ENCODE measurements at regions of chr3 and their contacts with region 1.

Region 1: DNA sequence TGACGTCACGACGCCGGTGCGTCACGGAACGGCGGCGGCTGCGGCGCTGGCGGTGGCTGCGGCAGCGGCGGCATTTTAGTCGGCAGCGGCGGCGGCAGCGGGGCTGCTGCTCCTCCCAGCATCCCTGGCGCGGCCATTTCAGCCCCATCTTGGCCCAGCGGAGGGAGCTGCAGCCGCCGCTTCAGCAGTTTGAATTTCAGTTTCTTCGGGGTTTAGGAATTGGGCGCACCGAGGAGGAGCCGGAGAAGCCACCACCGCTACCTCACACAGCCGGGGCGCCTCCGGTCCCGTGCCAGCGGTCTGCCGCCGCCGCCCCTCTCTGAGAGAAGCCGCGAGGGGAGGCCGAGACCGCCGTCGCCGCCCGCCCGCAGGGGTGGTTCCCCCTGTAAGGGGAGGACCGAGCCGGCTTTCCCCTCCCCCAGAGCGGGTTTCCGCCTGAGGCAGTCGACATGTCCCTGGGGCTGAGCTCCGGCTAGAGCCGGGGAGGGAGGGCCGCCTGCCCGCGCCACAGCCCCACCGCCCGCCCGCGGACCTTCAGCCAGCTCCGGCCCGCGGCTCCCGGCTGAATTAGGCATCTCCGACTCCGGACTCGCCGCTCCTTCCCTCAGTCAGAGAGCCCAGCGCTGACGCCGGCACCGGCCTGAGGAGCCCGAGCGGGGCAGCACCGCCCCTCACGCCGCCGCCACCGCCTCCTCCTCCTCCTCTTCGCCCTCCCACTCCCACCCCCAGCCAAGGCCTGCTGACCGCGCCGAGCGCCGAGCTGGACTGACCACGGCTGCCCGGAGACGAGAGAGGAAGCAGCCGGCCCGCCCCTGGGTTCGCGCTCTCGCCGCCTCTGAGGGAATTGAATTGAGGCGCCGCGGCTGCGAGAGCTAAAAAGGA is at the start of gene TSC22D2:
- DNase-seq: peak; percentile 98
- H3K4me3 ChIP-seq: peak within 1 kb of the TSS; percentile 89 to 92 (median 89)
- H3K27ac ChIP-seq: peak within 1 kb of the TSS; percentile 96 to 100 (median 98)
- H3K4me1 ChIP-seq: peaks cover 0 to 29% (median 13%) of the 10 kb centered on the region in 4 donors
- H3K27me3 ChIP-seq: no peaks in the 10 kb centered on the region
- CTCF ChIP-seq: peak in 1 of 4 experiments; percentile 25
- EP300 ChIP-seq: peak in 2 of 4 donors; percentile 16 to 35
- POLR2A ChIP-seq: peak; percentile 96 to 97
- total RNA-seq, gene TSC22D2: 14.6 to 24.9 (median 17.8) TPM

Region 2: DNA sequence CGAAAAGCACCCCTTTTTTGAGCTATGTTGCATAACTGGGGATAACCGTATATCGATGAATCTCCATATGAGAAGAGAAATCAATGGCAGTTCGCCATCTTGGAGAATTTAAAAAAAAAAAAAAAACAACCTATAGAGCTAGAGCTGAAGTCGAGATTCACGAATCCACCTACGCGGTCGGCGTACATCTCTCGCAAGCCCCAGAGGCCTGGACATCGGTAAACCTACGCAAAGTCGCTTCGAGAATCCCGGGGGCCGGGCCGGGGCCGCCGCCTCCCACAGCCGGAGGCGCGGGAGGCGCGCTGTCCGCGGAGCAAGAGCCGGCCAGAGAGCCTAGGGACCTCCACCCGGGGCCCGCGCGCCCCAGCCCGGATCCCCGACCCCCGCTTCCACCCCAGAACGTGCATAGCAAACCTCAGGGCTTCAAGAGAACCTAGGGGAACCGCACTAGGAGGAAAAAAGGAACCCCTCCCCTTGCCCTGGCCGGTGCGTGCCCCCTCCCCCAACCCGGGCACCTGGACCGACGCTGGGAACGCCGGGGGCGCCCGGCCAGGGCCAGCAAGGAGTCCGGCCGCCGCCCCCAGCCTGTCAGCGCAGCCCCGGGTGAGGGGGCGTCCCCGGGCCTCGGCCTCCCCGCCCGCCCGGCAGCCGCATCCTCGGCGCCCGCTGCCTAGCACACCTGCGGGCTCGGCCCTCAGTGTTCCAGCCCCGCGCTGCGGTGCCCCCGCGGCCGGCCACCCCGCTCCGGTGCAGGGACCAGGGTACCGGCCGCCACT is 438.3 kb before region 1 on chr3:
- intact Hi-C with region 1: loop called (anchors 2 kb)
- DNase-seq: peak; percentile 94
- H3K4me3 ChIP-seq: peak overlapping the region; percentile 79 to 98 (median 86)
- H3K27ac ChIP-seq: peak overlapping the region; percentile 92 to 98 (median 97)
- H3K4me1 ChIP-seq: peaks cover 0 to 47% (median 25%) of the 10 kb centered on the region in 4 donors
- H3K27me3 ChIP-seq: no peaks in the 10 kb centered on the region
- CTCF ChIP-seq: no peak
- EP300 ChIP-seq: no peak
- POLR2A ChIP-seq: peak in 1 of 2 donors; percentile 41

Region 3: DNA sequence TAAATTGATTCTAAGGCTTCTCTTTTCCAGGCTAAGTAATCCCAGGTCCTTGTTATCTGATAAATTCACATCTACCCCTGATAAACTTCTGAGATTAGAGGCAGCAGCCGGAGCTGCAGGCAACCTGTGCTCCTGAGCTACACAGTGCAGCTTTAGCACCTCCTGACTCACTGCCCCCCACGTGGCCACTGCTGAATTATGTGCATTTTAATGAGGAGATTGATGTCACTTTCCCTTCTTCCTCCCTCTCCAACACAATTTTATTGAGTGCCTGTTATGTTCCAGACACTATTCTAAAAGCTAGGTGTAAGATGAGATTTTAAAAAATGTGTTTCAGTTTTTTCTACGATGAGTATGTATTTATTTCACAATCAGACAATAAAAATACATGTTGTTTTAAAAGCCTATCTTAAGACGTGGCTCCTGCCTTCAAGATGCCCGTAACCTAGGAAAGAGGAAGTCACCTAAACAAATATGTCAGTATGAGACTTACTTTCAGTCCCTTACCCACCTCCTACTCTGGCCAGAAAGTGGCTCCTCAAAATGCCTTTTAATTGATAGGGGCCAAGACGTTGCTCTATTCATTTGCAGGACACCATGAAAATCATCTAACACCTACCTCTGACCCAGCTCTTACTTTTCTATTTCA is 276.2 kb before region 1 on chr3:
- intact Hi-C with region 1: no loop called
- DNase-seq: no peak
- H3K4me3 ChIP-seq: no peak overlapping the region
- H3K27ac ChIP-seq: no peak overlapping the region
- H3K4me1 ChIP-seq: peaks cover 0 to 6% (median 0%) of the 10 kb centered on the region in 4 donors
- H3K27me3 ChIP-seq: no peaks in the 10 kb centered on the region
- CTCF ChIP-seq: no peak
- EP300 ChIP-seq: no peak
- POLR2A ChIP-seq: no peak

Region 4: DNA sequence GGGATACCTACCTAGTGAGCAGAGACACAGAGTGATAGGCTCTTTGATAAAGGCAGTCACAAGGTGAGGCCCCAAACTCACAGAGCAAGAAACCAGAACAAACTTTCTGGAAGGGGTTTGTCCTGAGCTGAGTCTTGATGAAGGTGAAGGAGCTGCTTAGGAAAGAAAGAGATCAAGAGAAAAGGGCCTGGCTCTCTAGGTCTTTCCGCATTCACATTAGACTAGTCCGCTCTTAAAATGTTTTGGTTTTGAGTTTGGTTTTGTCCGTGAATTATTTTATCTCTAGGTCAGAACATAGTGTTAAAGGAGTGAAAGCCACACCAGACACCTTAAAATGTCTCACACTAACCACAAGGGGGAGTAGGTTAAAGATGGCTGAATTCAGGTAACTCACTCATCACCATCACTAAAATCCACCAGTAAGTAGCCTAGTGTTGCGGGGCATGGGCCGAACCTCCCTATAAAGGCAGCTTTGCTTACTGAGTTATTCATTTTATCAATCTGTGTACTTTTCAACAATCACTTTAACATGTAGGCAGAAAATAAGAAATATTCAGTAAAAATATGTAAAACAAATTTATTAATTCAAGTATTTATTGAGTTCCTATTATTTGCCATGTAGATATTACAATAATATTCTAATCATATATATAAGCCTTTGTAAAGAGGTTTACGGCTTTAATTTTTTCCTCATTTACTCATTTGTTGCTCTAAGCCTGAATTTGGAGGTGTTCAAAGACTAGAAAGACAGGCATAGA is 121.9 kb before region 1 on chr3:
- intact Hi-C with region 1: loop called (anchors 2 kb)
- DNase-seq: no peak
- H3K4me3 ChIP-seq: no peak overlapping the region
- H3K27ac ChIP-seq: no peak overlapping the region
- H3K4me1 ChIP-seq: no peaks in the 10 kb centered on the region
- H3K27me3 ChIP-seq: no peaks in the 10 kb centered on the region
- CTCF ChIP-seq: peak in 3 of 4 experiments; percentile 39 to 61 (median 44)
- EP300 ChIP-seq: no peak
- POLR2A ChIP-seq: no peak

Region 5: DNA sequence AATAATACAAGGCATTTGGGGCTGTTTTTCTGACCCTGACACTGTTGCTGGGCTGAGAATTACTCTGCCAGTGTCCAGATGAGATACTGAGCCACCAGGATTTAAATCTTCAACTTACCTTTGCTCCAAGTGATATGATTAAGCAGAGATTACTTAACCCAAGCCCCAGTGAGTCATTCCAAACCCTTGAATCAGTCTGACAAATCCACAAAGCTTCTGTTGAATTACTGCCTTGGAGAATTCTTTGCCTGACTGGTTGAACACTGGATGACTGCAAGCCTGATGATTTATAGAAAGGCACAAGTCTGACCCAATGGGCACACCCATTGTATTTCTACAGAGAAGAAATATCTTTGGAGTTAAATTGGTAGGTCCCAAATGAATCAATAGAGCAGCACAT is 88.6 kb before region 1 on chr3:
- intact Hi-C with region 1: no loop called
- DNase-seq: no peak
- H3K4me3 ChIP-seq: no peak overlapping the region
- H3K27ac ChIP-seq: no peak overlapping the region
- H3K4me1 ChIP-seq: no peaks in the 10 kb centered on the region
- H3K27me3 ChIP-seq: no peaks in the 10 kb centered on the region
- CTCF ChIP-seq: no peak
- EP300 ChIP-seq: no peak
- POLR2A ChIP-seq: no peak

Region 6: DNA sequence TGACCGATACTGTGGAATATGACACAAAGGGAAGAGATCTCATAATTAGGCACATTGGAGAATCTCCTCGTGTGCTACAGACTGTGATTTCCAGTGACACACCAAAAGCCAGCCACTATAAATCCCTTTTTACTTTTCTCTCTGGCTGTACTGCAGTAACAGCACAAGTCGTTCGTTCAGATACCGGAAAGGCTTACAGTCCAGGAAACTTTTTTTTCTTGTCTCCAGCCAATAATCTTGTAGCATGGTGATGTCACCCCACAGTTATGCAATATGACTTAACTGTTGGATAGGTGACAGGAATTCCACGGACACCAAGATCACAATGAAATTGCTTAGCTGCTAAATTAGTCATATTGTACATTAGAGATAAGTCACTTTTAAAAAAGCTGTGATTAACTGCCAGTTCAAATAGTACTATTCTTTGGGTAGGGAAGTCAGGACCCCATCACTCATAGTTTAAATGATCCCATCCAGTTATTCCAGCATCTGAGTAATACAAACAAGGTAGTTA is 36.7 kb before region 1 on chr3:
- intact Hi-C with region 1: loop called (anchors 2 kb)
- DNase-seq: peak; percentile 77
- H3K4me3 ChIP-seq: peak overlapping the region in 3 of 4 donors; percentile 29 to 42 (median 31)
- H3K27ac ChIP-seq: peak overlapping the region; percentile 66 to 91 (median 86)
- H3K4me1 ChIP-seq: peaks cover 0 to 28% (median 24%) of the 10 kb centered on the region in 4 donors
- H3K27me3 ChIP-seq: no peaks in the 10 kb centered on the region
- CTCF ChIP-seq: no peak
- EP300 ChIP-seq: peak in 2 of 4 donors; percentile 45 to 71
- POLR2A ChIP-seq: no peak

Region 7: DNA sequence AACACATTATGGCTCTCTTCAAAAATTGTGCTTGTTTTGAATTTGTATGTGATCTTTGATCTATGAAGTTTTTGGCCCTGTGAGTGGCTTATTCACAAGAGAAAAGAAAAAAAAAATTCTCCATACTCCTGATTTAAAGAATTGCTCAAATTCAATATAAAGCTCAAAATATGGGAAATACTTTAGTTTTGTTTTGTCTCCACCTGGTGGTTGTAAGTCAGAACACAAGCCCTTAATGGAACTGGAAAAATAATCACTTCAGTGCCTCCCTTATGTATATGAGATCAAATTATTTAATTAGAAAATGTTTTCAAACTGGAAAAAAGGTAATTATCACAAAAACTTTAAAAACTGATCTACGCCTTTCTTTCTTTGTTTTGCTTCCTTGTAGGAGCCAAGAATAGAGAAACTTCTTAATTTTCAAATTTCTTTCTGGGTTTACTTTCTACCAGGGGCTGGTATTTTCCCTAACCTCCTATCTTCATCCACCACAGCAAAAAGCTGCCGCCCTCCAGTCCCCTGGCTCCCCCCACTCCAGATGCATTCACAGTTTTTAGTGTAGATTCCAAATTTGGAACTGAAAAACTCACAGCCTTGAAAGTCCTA is 87.2 kb after region 1 on chr3:
- intact Hi-C with region 1: loop called (anchors 1 kb)
- DNase-seq: no peak
- H3K4me3 ChIP-seq: no peak overlapping the region
- H3K27ac ChIP-seq: no peak overlapping the region
- H3K4me1 ChIP-seq: no peaks in the 10 kb centered on the region
- H3K27me3 ChIP-seq: no peaks in the 10 kb centered on the region
- CTCF ChIP-seq: peak; percentile 38 to 81 (median 70)
- EP300 ChIP-seq: no peak
- POLR2A ChIP-seq: no peak

Region 8: GRCh38 chr3:150603153-150603979 is 194.9 kb after region 1 on chr3 and contains the start of gene SELENOT:
- intact Hi-C with region 1: loop called (anchors 5 kb)
- DNase-seq: peak; percentile 97
- H3K4me3 ChIP-seq: peak within 1 kb of the TSS; percentile 71 to 85 (median 78)
- H3K27ac ChIP-seq: peak within 1 kb of the TSS; percentile 95 to 98 (median 97)
- H3K4me1 ChIP-seq: peaks cover 0 to 47% (median 45%) of the 10 kb centered on the region in 4 donors
- H3K27me3 ChIP-seq: no peaks in the 10 kb centered on the region
- CTCF ChIP-seq: peak in 3 of 4 experiments; percentile 19 to 33 (median 30)
- EP300 ChIP-seq: no peak
- POLR2A ChIP-seq: peak; percentile 94
- total RNA-seq, gene SELENOT: 80.4 to 126 (median 110) TPM

Measured in sigmoid colon (tissue), 7 donors.